ENCODE measurements at regions of chr12 and their contacts with region 1.

Region 1: DNA sequence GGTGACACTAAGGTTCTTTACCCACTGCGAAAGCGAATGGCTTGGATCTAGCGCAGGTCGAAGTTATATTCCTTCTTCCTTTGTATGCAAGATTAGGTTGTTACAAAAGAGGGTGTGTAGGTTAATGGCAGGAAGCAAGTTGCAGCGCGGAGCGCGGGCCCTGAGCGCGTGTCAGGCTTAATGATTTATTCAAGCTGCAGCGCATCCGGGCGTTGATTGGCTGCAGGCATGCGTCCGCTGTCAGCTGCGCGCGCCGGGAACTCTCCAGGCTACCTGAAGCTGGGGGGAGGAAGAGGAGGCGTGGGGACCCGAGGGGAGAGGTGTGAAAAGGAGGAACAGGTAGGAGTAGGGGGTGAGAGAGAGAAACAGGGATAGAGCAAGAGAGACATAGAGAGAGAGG is 7.4 kb downstream of the ASCL1 start:
- DNase-seq: no peak
- H3K4me3 ChIP-seq: peak overlapping the region in 2 of 3 donors; percentile 35 to 51
- H3K27ac ChIP-seq: no peak overlapping the region
- H3K4me1 ChIP-seq: no peaks in the 10 kb centered on the region
- H3K27me3 ChIP-seq: peaks cover 0 to 64% of the 10 kb centered on the region in 2 donors
- CTCF ChIP-seq: no peak
- POLR2A ChIP-seq: no peak

Region 2: GRCh38 chr12:102765736-102766135 is 199.1 kb before region 1 on chr12:
- intact Hi-C with region 1: no loop called
- DNase-seq: no peak
- H3K4me3 ChIP-seq: no peak overlapping the region
- H3K27ac ChIP-seq: no peak overlapping the region
- H3K4me1 ChIP-seq: no peaks in the 10 kb centered on the region
- H3K27me3 ChIP-seq: no peaks in the 10 kb centered on the region
- CTCF ChIP-seq: no peak
- POLR2A ChIP-seq: no peak

Region 3: DNA sequence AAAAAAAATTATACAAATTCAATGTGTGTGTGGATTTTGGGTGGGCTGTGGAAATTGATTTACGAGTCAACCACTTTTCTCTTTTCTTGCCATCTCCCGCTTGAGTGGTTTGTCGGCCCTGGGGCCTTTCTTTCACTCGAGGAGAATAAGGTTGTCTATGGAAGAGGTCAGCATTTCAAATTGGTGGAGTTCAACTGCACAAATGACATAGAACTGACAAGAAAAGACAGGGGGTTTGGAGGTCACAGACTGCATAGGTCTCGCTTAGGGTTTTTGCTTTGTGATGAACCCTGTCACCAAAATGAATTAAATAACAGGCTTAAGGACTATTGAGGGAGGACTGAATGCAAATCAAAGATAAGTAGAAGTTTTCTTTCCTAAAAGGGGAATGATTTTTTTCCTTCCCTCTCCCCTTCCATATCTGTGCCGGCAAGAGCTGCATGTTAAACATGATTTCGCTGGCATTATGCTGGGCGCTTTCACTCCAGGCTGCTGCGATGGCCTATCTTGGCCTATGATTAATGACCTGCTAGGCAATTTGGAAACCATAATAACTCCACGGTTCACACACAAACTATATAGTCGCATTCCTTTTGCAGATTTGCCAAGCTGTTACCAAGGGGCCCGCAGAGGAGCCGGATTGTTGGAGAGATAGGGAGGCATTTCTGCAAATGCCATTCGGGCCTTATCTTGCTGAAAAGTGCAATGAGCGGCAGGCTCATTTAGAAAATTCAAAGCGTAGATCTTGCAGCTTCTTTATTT is 13.3 kb after region 1 on chr12:
- intact Hi-C with region 1: loop called (anchors 2 kb)
- DNase-seq: no peak
- H3K4me3 ChIP-seq: no peak overlapping the region
- H3K27ac ChIP-seq: no peak overlapping the region
- H3K4me1 ChIP-seq: no peaks in the 10 kb centered on the region
- H3K27me3 ChIP-seq: no peaks in the 10 kb centered on the region
- CTCF ChIP-seq: no peak
- POLR2A ChIP-seq: no peak

Region 4: DNA sequence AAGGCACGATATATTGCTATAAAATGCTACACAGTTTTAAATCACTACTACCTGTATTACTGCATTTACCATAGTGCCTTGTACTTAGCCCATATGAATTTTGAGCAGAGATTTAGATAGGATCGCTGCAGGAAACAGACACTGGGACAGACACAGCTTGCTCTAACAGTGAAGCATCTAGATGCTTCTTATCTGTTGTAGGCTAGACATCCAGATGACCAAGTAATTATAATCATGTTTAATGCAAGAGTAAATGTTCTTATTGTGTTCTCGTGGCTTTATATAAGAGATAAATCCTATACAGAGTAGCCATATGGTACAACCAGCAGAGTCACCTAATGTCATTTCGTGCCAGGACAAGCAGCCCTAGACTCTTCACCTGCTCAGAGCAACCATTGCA is 85.4 kb after region 1 on chr12:
- intact Hi-C with region 1: no loop called
- DNase-seq: no peak
- H3K4me3 ChIP-seq: no peak overlapping the region
- H3K27ac ChIP-seq: no peak overlapping the region
- H3K4me1 ChIP-seq: no peaks in the 10 kb centered on the region
- H3K27me3 ChIP-seq: no peaks in the 10 kb centered on the region
- CTCF ChIP-seq: no peak
- POLR2A ChIP-seq: no peak

Measured in breast epithelium (tissue), 4 donors.